Activated naive CD8-positive, alpha-beta T cell treated with anti-CD3 and anti-CD28 coated beads, Interleukin-2, amount 10 ng/mL, durations not matched to agents 7 days and 5 days (primary cell): ENCODE measurements at regions of chr16 and their contacts with region 1.

Region 1: GRCh38 chr16:3129137-3130131 is 5.4 kb upstream of the ZNF213 start:
- DNase-seq: peak; percentile 75
- ATAC-seq: peak; percentile 62
- H3K4me3 Mint-ChIP-seq: peak overlapping the region; percentile 96
- H3K27ac Mint-ChIP-seq: peak overlapping the region; percentile 92
- H3K4me1 Mint-ChIP-seq: peaks cover 41% of the 10 kb centered on the region
- H3K27me3 Mint-ChIP-seq: no peaks in the 10 kb centered on the region

Region 2: GRCh38 chr16:3027945-3028712 is 101.3 kb before region 1 on chr16:
- POLR2A ChIA-PET with region 1: interaction called, 13 read pairs
- DNase-seq: peak; percentile 93
- ATAC-seq: peak; percentile 28
- H3K4me3 Mint-ChIP-seq: peak overlapping the region; percentile 81
- H3K27ac Mint-ChIP-seq: peak overlapping the region; percentile 61
- H3K4me1 Mint-ChIP-seq: peaks cover 27% of the 10 kb centered on the region
- H3K27me3 Mint-ChIP-seq: peaks cover 16% of the 10 kb centered on the region

Region 3: DNA sequence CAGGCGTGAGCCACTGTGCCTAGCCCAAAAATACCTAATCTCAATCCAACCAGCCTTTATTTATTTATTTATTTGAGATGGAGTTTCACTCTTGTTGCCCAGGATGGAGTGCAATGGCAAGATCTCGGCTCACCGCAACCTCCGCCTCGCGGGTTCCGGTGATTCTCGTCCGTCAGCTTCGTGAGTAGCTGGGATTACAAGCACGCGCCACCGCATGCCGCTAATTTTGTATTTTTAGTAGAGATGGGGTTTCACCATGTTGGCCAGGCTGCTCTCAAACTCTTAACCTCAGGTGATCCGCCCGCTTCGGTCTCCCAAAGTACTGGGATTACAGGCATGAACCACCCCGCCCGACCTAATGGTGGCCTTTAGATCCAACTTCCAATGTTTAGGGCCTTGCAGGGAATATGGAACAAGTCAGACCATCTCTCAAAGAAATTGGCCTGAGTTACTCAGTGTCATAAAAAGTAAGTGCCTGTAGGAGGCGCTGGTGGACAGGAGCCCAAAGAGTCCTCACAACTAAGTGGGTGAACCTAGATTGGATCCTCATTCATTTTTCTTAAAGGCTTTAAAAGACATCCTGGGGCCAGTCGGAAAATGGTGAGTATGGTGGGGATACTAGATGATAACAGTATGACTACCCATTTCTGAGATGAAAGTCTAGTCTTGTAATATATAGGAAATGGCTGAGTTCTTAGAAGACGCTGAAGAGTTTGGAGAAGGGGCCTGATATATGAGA is 35.0 kb before region 1 on chr16:
- POLR2A ChIA-PET with region 1: interaction called, 27 read pairs
- DNase-seq: no peak
- ATAC-seq: peak; percentile 37
- H3K4me3 Mint-ChIP-seq: peak overlapping the region; percentile 8
- H3K27ac Mint-ChIP-seq: peak overlapping the region; percentile 54
- H3K4me1 Mint-ChIP-seq: peaks cover 23% of the 10 kb centered on the region
- H3K27me3 Mint-ChIP-seq: peaks cover 2% of the 10 kb centered on the region

Region 4: GRCh38 chr16:3099732-3100499 is 29.5 kb before region 1 on chr16:
- POLR2A ChIA-PET with region 1: interaction called, 27 read pairs
- DNase-seq: peak; percentile 94
- ATAC-seq: peak; percentile 82
- H3K4me3 Mint-ChIP-seq: peak overlapping the region; percentile 89
- H3K27ac Mint-ChIP-seq: peak overlapping the region; percentile 90
- H3K4me1 Mint-ChIP-seq: peaks cover 29% of the 10 kb centered on the region
- H3K27me3 Mint-ChIP-seq: peaks cover 2% of the 10 kb centered on the region

Region 5: GRCh38 chr16:3106205-3106928 is 23.1 kb before region 1 on chr16:
- POLR2A ChIA-PET with region 1: interaction called, 27 read pairs
- DNase-seq: peak; percentile 95
- ATAC-seq: peak; percentile 89
- H3K4me3 Mint-ChIP-seq: peak overlapping the region; percentile 82
- H3K27ac Mint-ChIP-seq: peak overlapping the region; percentile 89
- H3K4me1 Mint-ChIP-seq: peaks cover 20% of the 10 kb centered on the region
- H3K27me3 Mint-ChIP-seq: peaks cover 2% of the 10 kb centered on the region

Region 6: DNA sequence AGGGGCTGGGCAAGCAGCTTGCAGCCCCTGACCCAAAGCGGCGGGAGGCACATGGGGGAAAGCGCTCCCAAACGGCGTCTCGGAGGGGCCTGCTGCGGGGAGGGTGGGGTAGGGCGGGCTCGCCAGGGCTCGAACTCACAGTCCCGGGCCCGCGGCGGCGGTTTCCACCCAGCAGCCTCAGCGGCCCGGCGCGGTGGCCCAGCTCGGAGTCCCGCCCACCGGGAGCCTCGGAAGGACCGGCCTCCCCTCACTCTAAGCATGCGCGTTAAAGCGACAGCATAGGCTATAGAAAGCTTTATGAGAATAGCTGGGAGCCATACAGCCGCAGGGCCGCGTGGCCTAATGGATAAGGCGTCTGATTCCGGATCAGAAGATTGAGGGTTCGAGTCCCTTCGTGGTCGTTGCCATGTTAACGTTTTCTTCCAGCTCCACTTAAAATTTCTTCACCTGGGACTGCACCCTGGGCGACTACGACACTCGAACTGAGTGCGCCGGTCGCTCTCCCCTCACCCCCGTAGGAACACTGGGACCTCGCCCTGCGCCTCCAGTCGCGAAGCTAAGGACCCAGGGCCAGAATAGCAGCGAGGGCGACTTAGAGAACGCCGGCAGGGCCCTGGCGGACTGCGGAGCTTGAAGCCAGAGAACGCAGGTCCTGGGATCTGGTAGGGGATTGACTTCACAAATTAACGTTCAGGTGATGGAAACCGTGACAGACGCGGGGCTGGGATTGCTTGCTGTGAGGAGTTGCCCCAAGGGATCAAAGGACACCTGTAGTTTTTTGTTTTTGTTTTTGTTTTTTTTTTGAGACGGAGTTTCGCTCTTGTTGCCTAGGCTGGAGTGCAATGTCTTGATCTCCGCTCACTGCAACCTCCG is 21.1 kb after region 1 on chr16:
- POLR2A ChIA-PET with region 1: interaction called, 42 read pairs
- DNase-seq: peak; percentile 99
- ATAC-seq: peak; percentile 84
- H3K4me3 Mint-ChIP-seq: peak overlapping the region; percentile 88
- H3K27ac Mint-ChIP-seq: peak overlapping the region; percentile 89
- H3K4me1 Mint-ChIP-seq: peaks cover 24% of the 10 kb centered on the region
- H3K27me3 Mint-ChIP-seq: peaks cover 4% of the 10 kb centered on the region